Tibial artery (tissue), 4 donors: ENCODE measurements at regions of chr15 and their contacts with region 1.

Region 1: GRCh38 chr15:42920519-42921227 is at the start of gene TTBK2:
- DNase-seq: peak; percentile 97 to 99
- H3K4me3 ChIP-seq: peak within 1 kb of the TSS; percentile 84 to 99
- H3K27ac ChIP-seq: peak within 1 kb of the TSS; percentile 92 to 96
- H3K4me1 ChIP-seq: peaks cover 0 to 27% (median 5%) of the 10 kb centered on the region in 4 donors
- H3K27me3 ChIP-seq: no peaks in the 10 kb centered on the region
- CTCF ChIP-seq: peak in 1 of 2 experiments; percentile 38

Region 2: DNA sequence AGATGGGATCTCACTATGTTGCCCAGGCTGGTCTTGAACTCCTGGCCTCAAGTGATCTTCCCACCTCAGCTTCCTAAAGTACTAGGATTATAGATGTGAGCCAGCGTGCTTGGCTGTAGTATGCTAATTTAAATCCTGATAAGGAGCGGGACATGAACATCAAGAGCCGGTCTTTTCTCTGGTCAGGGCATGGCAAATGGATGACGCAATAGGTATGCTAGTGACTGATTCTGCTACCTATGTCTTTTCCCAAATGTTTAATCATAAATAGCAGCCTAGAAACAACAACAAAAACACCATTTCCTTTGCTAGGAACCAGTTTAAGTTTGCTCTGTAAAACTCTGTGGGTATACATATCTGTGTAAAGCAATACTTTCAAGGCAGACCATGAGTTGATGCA is 280.6 kb before region 1 on chr15:
- intact Hi-C with region 1: no loop called
- DNase-seq: no peak
- H3K4me3 ChIP-seq: no peak overlapping the region
- H3K27ac ChIP-seq: no peak overlapping the region
- H3K4me1 ChIP-seq: no peaks in the 10 kb centered on the region
- H3K27me3 ChIP-seq: no peaks in the 10 kb centered on the region
- CTCF ChIP-seq: no peak

Region 3: DNA sequence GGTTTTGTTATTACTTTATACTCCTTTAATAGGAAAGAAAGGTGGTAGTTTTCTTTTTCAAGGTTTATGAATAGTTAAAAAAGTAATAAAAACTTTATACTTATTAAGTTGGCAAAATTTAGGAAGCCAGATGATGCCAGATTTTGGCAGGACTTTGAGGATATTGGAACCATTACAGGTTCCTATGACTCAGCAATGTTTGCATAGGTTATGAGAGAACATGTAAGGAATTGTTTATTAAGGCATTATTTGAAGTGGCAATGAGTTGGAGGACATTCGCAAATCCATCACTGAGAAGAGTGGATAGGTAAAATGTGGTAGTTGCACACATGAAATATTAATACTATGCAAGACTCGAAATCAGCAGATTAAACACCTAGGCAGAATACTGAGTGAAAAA is 213.6 kb before region 1 on chr15:
- intact Hi-C with region 1: loop called (anchors 5 kb)
- DNase-seq: no peak
- H3K4me3 ChIP-seq: no peak overlapping the region
- H3K27ac ChIP-seq: peak overlapping the region in 1 of 2 donors; percentile 21
- H3K4me1 ChIP-seq: peaks cover 0 to 19% (median 4%) of the 10 kb centered on the region in 4 donors
- H3K27me3 ChIP-seq: no peaks in the 10 kb centered on the region
- CTCF ChIP-seq: no peak

Region 4: DNA sequence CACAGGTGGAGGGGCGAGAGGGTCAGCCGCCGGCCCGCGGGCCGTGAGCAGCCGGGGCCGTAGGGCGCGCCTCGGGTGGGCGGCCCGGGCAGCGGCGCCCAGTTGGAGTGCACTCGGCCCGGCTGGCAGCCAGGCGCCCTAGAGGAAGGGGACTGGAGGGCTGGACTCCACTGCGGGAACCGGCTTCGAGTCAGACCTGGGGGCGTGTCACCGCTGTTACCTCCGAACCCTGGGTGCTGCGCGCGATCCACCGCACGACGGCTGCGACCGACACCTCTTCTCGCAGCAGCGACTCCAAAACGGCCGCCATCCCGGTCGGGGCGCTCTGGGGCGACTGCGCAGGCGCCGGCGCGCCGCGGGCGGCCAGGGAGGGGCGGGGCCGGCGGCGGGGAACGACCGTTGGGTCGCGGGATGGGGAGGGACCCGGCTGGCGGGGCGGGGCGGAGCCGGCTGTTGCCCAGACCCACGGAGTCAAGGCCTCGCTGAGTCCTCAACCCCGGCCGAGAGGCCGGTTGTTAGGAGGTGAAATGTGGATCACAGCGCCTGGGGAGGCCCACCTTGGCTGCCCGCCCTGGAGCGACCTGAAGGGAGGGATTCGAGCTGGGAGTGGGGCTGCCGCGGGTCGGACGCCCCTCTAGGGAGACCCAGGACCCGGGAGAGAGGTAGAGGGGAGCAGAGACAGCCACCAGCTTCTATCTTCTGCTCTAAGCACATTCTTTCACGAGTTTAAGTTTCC is 183.7 kb before region 1 on chr15 and contains the start of gene CDAN1:
- intact Hi-C with region 1: loop called (anchors 10 kb)
- DNase-seq: peak; percentile 87 to 96
- H3K4me3 ChIP-seq: peak within 1 kb of the TSS; percentile 70 to 91
- H3K27ac ChIP-seq: peak within 1 kb of the TSS; percentile 82 to 83
- H3K4me1 ChIP-seq: peaks cover 0 to 23% (median 12%) of the 10 kb centered on the region in 4 donors
- H3K27me3 ChIP-seq: no peaks in the 10 kb centered on the region
- CTCF ChIP-seq: no peak

Region 5: GRCh38 chr15:42984493-42985034 is 63.9 kb after region 1 on chr15:
- intact Hi-C with region 1: no loop called
- DNase-seq: no peak
- H3K4me3 ChIP-seq: no peak overlapping the region
- H3K27ac ChIP-seq: no peak overlapping the region
- H3K4me1 ChIP-seq: no peaks in the 10 kb centered on the region
- H3K27me3 ChIP-seq: no peaks in the 10 kb centered on the region
- CTCF ChIP-seq: no peak